ENCODE measurements at regions of chr19 and their contacts with region 1.

Region 1: DNA sequence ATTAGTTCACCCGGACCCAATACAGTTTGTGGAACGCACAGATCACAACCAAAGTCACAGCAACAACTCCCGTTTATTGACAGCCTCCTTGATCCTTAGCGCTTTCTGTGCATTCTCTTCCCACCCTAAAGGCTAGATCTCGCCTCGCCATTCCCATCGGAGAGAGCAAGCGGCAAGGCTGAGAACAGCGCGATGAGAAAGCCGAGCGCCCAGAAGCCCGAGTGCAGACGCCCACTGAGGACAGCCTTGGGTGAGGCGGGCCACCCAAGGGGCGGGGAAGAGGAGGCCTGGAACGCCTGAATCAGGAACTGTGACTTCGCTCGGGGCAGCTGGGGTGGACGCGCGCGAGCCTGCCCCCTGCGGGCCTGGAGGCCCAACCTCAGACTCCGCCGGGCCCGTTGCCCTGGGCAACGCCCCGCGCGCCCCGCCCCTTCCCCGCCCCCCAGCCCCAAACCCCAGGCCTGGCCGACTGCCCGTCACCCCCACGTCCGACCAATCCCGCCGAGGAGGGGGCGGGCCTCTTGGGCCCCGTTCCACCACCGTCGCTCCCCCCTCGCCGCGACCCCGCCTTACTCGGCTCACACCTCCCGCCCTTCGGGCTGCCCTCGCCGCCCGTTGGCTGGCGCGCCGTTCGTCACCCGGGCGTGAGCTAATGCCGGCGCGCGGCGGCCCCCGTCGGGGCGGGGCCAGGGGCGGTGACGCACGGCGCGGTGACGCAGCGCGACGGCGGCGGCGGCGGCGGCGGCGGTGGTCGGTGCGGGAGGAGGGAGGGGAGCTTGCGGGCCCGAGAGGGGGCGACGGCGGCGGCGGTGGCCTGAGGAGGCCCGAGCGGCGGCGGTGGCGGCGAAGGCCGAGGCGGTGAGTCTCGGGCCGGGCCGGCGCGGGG is at the start of gene SAMD4B:
- DNase-seq: peak; percentile 98
- H3K4me3 ChIP-seq: peak within 1 kb of the TSS; percentile 83 to 90
- H3K27ac ChIP-seq: peak within 1 kb of the TSS; percentile 87 to 91
- H3K4me1 ChIP-seq: peaks cover 5% of the 10 kb centered on the region
- H3K27me3 ChIP-seq: no peaks in the 10 kb centered on the region
- CTCF ChIP-seq: peak; percentile 61 to 91 (median 86)
- POLR2A ChIP-seq: peak; percentile 88
- total RNA-seq, gene SAMD4B: 133 to 227 TPM

Region 2: GRCh38 chr19:39390755-39391592 is 49.0 kb after region 1 on chr19 and contains the starts of genes MED29 and PAF1:
- intact Hi-C with region 1: loop called (anchors 2 kb)
- DNase-seq: peak; percentile 99
- H3K4me3 ChIP-seq: peak within 1 kb of the TSS; percentile 76 to 89
- H3K27ac ChIP-seq: peak within 1 kb of the TSS; percentile 98 to 99
- H3K4me1 ChIP-seq: peaks cover 8% of the 10 kb centered on the region
- H3K27me3 ChIP-seq: no peaks in the 10 kb centered on the region
- CTCF ChIP-seq: peak in 2 of 4 experiments; percentile 8 to 29
- POLR2A ChIP-seq: peak; percentile 86
- total RNA-seq, gene MED29: 50.2 to 56.4 TPM
- total RNA-seq, gene PAF1: 47.5 to 63.6 TPM

Region 3: GRCh38 chr19:39412100-39412866 is 70.3 kb after region 1 on chr19 and contains the start of gene PLEKHG2:
- intact Hi-C with region 1: loop called (anchors 5 kb)
- DNase-seq: peak; percentile 99
- H3K4me3 ChIP-seq: peak within 1 kb of the TSS; percentile 73 to 76
- H3K27ac ChIP-seq: peak within 1 kb of the TSS; percentile 100
- H3K4me1 ChIP-seq: no peaks in the 10 kb centered on the region
- H3K27me3 ChIP-seq: no peaks in the 10 kb centered on the region
- CTCF ChIP-seq: peak in 3 of 4 experiments; percentile 93 to 94 (median 93)
- POLR2A ChIP-seq: peak; percentile 45
- total RNA-seq, gene PLEKHG2: 14.4 to 21.1 TPM